AG04450 (cell line): ENCODE measurements at regions of chr15 and their contacts with region 1.

Region 1: DNA sequence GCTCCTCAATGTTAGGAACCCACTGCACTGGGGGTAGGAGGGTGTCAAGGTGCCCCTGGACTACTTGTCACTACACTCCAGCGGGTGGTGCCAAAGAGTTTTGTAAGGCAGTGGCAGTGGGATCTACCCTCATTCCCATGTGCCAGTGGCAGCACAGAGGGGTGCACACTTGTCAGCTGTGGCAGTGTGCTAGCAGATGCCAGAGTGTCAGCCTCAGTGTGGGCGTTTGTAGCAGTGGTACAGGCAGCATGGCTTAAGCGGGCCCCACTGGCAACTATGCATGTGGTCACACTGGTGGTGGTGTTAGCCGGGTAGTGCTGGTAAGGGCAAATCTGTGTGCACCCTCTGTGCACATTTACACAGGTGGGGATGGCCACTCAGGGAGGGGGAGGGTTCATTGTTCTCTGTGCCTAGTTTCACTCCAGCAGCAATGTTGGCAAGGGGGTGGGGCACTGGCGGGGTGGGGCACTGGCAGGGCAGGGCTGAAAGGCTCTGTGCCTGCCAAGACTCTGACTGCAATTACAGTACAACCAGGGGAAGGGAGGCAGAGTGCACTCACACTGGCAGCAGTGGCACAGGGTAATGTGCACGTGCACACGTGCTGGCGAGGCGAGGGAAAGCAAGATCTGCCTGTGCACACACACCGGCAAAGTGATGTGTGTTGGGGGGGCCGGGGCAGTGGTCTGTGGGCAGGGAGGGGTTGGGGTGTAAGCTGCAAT is 31.8 kb downstream of the MYO9A start:
- DNase-seq: no peak
- H3K4me3 ChIP-seq: no peak overlapping the region
- H3K27ac ChIP-seq: no peak overlapping the region
- H3K27me3 ChIP-seq: no peaks in the 10 kb centered on the region
- CTCF ChIP-seq: no peak

Region 2: GRCh38 chr15:71934446-71934845 is 151.7 kb before region 1 on chr15:
- CTCF ChIA-PET with region 1: interaction called, 12 read pairs
- POLR2A ChIA-PET with region 1: no interaction called
- DNase-seq: no peak
- H3K4me3 ChIP-seq: no peak overlapping the region
- H3K27ac ChIP-seq: no peak overlapping the region
- H3K27me3 ChIP-seq: no peaks in the 10 kb centered on the region
- CTCF ChIP-seq: no peak

Region 3: DNA sequence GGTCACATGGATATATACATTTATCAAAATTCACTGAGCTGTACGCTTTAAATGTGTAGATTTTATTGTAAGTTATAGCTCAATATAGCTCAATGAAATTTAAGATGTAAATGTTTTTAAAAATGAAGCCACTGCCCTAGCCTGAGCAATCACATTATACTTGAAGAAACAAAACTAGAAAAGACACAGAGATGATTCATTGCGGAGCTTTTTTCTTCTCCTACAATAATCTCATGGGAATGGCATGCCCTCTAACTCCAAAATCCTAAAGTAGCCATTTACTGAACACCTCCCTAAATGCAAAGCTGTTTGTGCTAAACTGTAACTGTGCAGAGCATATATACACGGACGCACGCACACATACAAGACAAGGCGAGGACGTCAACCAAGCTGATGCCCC is 52.4 kb before region 1 on chr15:
- CTCF ChIA-PET with region 1: no interaction called
- POLR2A ChIA-PET with region 1: no interaction called
- DNase-seq: no peak
- H3K4me3 ChIP-seq: no peak overlapping the region
- H3K27ac ChIP-seq: no peak overlapping the region
- H3K27me3 ChIP-seq: no peaks in the 10 kb centered on the region
- CTCF ChIP-seq: no peak

Region 4: GRCh38 chr15:72098040-72098439 is 11.9 kb after region 1 on chr15:
- CTCF ChIA-PET with region 1: no interaction called
- POLR2A ChIA-PET with region 1: no interaction called
- DNase-seq: no peak
- H3K4me3 ChIP-seq: no peak overlapping the region
- H3K27ac ChIP-seq: no peak overlapping the region
- H3K27me3 ChIP-seq: no peaks in the 10 kb centered on the region
- CTCF ChIP-seq: no peak